Right ventricle myocardium superior (tissue), 1 donor: ENCODE measurements at regions of chr3 and their contacts with region 1.

Region 1: DNA sequence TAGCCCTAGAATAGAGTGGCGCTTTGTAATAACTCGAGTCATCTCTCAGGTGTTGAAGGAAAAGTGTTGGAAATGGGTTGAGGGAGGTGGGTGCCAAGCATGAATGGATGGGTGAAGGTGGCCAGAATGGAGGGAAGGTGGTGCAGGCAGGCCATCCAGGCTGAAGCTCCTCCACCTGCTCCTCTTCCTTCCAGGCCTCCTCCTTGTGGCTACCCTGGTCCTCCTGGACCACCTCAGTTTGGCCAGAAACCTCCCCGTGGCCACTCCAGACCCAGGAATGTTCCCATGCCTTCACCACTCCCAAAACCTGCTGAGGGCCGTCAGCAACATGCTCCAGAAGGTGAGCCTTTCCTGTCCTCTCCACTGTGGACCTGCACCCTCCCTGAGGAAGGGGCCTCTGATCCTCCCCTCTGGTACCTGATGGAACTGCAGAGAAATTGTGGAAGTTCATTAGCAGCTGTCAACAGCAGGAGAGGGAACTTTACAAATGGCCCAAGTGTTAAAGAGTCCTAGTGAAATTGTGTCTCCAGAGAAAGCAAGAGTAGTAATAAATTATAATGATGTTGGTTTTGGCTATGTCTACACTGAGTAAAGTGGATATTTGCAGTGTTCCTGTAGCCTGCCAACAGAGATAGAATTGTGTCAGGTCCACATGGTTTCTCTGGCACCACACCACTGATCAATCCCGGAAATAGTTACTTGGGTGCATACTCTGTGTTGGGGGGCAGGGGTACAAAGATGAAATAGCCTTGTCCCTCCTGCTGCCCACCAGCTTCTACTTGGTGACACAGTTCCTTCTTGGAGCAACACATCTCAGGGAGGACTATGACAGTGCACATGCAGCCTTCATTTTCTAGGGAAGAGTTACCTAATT is 1.6 kb downstream of the IL12A start:
- DNase-seq: no peak
- ATAC-seq: no peak

Region 2: GRCh38 chr3:159828542-159828943 is 161.7 kb before region 1 on chr3:
- intact Hi-C with region 1: loop called (anchors 5 kb)
- DNase-seq: no peak
- ATAC-seq: peak; percentile 77

Region 3: GRCh38 chr3:159929435-159930141 is 60.6 kb before region 1 on chr3:
- intact Hi-C with region 1: no loop called
- DNase-seq: no peak
- ATAC-seq: peak; percentile 87